ENCODE measurements at regions of chr6 and their contacts with region 1.

Region 1: DNA sequence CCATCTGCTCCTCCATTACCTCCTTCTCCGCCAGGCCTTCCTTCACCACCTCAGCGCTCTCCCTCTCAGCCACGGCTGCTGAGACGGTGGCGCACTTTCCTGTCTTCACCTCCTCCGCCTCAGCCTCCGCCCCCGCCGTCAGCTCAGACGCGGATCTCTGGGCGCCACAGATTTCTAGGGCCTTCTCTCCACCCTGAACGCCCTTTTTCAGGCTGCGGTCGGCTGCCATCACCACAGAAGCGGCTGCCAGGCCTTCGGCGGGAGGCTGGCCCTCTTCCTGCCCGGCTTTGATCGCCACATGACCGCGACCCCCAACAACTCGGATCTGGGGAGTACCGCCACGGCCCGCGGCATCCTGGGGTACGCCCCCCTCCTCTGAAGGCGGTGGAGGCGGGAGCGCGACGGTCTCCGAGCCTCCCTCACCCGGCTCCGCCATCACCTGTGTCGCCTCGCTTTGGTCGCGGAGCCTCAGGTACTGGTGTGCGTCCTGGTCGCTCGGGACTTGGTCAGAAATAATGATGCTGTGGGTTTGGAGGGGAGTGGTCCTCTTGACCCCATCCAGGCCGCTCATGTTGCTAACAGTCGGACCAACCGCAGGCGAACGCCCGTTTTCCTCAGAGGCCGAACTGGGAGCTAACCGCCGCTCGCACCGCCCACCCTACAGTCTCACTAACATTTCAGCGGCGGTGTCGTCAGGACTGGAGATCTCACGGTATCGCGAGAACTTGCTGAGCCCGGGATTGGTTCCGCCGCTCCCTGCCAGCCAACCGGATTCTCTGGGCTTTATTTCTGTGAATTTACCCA is at the start of gene TSPYL1:
- DNase-seq: peak; percentile 97
- ATAC-seq: peak; percentile 94
- H3K4me3 Mint-ChIP-seq: peak within 1 kb of the TSS; percentile 93
- H3K27ac Mint-ChIP-seq: peak within 1 kb of the TSS; percentile 98
- H3K4me1 Mint-ChIP-seq: peaks cover 32% of the 10 kb centered on the region
- H3K27me3 Mint-ChIP-seq: no peaks in the 10 kb centered on the region
- total RNA-seq, gene TSPYL1: 37.5 to 38.2 TPM

Region 2: DNA sequence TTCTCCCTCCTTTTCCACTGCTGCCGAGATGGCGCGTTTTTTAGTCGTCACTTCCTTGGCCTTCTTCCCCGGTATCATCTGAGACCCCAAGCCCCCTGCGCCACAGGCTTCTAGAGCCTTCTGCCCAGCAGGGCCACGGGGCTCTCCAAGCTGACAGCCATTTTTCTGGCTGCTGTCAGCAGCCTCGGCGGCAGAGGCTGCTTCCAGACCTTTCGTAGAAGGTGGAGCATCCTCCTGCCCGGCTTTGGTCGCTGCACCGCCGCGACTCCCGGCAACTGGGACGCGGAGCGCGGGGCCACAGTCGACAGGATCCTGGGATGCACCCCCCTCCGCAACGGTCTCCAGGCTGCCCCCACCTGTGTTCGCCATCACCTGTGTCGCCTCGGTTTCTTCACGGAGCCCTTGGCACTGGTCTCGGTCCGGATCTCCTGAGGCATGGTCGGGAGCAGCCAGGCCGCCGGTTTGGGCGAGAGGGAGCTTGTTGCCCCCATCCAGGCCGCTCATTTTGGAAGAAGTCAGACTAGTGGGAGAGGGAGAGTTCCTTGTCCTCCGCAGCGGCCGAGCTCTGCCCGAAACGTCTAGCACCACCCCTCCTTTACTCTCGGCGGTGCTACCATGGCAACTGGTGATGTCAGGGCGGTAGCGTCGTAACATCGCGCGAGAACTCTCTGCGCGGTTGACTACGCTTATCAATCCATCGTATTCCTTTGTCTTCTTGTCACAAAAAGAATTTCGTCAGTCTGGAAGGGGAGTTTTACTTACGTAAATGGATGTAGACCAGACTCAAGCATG is 25.8 kb before region 1 on chr6 and contains the start of gene TSPYL4:
- CTCF ChIA-PET with region 1: interaction called, 3 read pairs
- POLR2A ChIA-PET with region 1: interaction called, 4 read pairs
- intact Hi-C with region 1: loop called (anchors 1 kb)
- DNase-seq: peak; percentile 95
- ATAC-seq: peak; percentile 99
- H3K4me3 Mint-ChIP-seq: no peak within 1 kb of the TSS
- H3K27ac Mint-ChIP-seq: no peak within 1 kb of the TSS
- H3K4me1 Mint-ChIP-seq: peaks cover 19% of the 10 kb centered on the region
- H3K27me3 Mint-ChIP-seq: no peaks in the 10 kb centered on the region
- total RNA-seq, gene TSPYL4: 9.4 to 10.8 TPM

Region 3: DNA sequence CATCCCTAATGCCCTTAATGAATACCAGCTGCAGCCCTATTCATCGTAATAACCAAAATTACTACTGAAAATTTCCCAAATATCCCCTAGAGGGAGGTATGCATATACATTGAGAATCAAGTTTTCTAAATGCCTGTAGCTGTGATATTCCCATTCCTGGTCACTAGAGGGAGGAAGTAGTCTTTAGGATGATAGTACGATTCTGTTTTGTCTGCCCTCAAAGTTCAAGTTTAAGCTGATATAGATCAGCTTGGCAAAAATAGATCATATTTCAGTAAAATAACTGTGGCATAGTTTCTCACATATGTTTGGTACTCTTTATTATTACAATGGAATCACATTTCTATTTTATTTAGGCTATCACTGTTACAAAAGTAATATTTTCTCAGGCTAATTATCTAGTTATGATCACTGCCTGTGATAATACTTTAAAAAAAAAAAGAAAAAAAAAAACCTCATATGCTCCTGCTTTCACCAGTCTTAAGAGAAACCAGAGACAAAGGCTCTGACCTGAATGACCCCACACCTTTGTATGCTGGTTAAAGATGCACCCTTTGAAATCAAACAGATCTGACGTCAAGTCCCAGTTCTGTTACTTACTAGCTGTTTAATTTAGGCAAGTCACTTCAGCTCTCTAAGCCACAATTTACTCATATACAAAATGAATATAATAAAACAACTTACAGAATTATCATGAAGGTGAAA is 10.7 kb before region 1 on chr6:
- CTCF ChIA-PET with region 1: interaction called, 24 read pairs
- POLR2A ChIA-PET with region 1: interaction called, 5 read pairs
- intact Hi-C with region 1: no loop called
- DNase-seq: no peak
- ATAC-seq: peak; percentile 72
- H3K4me3 Mint-ChIP-seq: no peak overlapping the region
- H3K27ac Mint-ChIP-seq: no peak overlapping the region
- H3K4me1 Mint-ChIP-seq: peaks cover 28% of the 10 kb centered on the region
- H3K27me3 Mint-ChIP-seq: no peaks in the 10 kb centered on the region

Region 4: GRCh38 chr6:116461932-116462885 is 182.7 kb after region 1 on chr6:
- CTCF ChIA-PET with region 1: no interaction called
- POLR2A ChIA-PET with region 1: no interaction called
- intact Hi-C with region 1: loop called (anchors 5 kb)
- DNase-seq: peak; percentile 80
- ATAC-seq: peak; percentile 90
- H3K4me3 Mint-ChIP-seq: peak overlapping the region; percentile 57
- H3K27ac Mint-ChIP-seq: peak overlapping the region; percentile 79
- H3K4me1 Mint-ChIP-seq: peaks cover 34% of the 10 kb centered on the region
- H3K27me3 Mint-ChIP-seq: peaks cover 31% of the 10 kb centered on the region

Region 5: GRCh38 chr6:116667623-116668022 is 388.2 kb after region 1 on chr6:
- CTCF ChIA-PET with region 1: no interaction called
- POLR2A ChIA-PET with region 1: interaction called, 5 read pairs
- intact Hi-C with region 1: loop called (anchors 1 to 10 kb)
- DNase-seq: no peak
- ATAC-seq: no peak
- H3K4me3 Mint-ChIP-seq: peak overlapping the region; percentile 89
- H3K27ac Mint-ChIP-seq: peak overlapping the region; percentile 96
- H3K4me1 Mint-ChIP-seq: peaks cover 38% of the 10 kb centered on the region
- H3K27me3 Mint-ChIP-seq: no peaks in the 10 kb centered on the region

Region 6: GRCh38 chr6:116680975-116681808 is 401.7 kb after region 1 on chr6 and contains the start of gene KPNA5:
- CTCF ChIA-PET with region 1: no interaction called
- POLR2A ChIA-PET with region 1: no interaction called
- intact Hi-C with region 1: loop called in 1 of 2 experiments (anchors 1 kb)
- DNase-seq: peak; percentile 96
- ATAC-seq: peak; percentile 96
- H3K4me3 Mint-ChIP-seq: peak within 1 kb of the TSS; percentile 98
- H3K27ac Mint-ChIP-seq: peak within 1 kb of the TSS; percentile 99
- H3K4me1 Mint-ChIP-seq: peaks cover 31% of the 10 kb centered on the region
- H3K27me3 Mint-ChIP-seq: no peaks in the 10 kb centered on the region
- total RNA-seq, gene KPNA5: 10.4 to 13.6 TPM

Measured in activated CD4-positive, alpha-beta T cell treated with anti-CD3 and anti-CD28 coated beads for 36 hours (primary cell).